Heart left ventricle (tissue), 16 donors: ENCODE measurements at regions of chr3 and their contacts with region 1.

Region 1: GRCh38 chr3:140093742-140094141 is 158.8 kb downstream of the CLSTN2 start:
- DNase-seq: peak in 4 of 5 donors; percentile 68 to 77 (median 71)
- ATAC-seq: peak in 3 of 4 donors; percentile 83 to 95 (median 90)
- H3K4me3 ChIP-seq: no peak overlapping the region
- H3K27ac ChIP-seq: no peak overlapping the region
- H3K4me1 ChIP-seq: peaks cover 0 to 23% (median 8%) of the 10 kb centered on the region in 12 donors
- H3K27me3 ChIP-seq: no peaks in the 10 kb centered on the region
- CTCF ChIP-seq: no peak
- POLR2A ChIP-seq: no peak

Region 2: DNA sequence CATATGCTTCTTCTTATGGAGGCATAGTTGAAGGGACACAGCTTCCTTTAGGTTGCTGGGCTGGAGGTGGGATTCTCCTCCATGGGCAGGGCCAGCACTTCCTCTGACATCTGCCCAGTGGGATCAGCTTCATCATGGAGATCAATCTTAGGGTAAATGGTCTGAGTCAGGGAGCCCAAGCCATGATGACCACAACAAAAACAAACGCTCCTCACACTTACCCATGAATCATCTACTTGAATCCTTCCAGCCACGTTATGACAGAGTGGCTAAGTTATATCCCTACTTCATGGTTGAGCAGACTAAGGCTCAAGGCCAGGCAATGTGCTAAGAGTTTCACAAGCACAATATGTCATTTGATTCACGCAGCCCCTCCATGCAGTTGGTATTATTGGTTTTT is 328.8 kb before region 1 on chr3:
- intact Hi-C with region 1: loop called in 1 of 10 experiments (anchors 5 kb)
- DNase-seq: no peak
- ATAC-seq: no peak
- H3K4me3 ChIP-seq: no peak overlapping the region
- H3K27ac ChIP-seq: no peak overlapping the region
- H3K4me1 ChIP-seq: peaks cover 0 to 11% (median 0%) of the 10 kb centered on the region in 12 donors
- H3K27me3 ChIP-seq: no peaks in the 10 kb centered on the region
- CTCF ChIP-seq: no peak
- POLR2A ChIP-seq: no peak

Region 3: DNA sequence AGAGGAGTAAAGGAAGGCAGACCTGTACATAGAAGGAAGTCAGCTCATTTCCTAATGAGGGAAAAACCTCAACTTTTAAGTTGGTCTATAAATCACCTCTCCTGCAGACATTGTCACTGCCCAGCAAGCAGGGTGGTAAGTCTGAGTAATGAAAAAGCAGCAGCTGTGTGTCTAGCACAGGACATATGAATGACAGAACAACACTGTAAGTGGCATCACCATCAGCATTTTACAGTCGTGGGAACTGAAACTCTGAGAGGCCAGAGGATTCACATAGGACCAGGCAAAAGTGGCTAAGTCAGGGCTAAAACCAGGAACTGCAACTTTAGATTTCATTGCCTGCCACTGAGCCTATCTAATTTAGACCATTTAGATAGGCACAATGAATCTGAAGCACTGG is 76.9 kb after region 1 on chr3:
- intact Hi-C with region 1: no loop called
- DNase-seq: no peak
- ATAC-seq: no peak
- H3K4me3 ChIP-seq: no peak overlapping the region
- H3K27ac ChIP-seq: no peak overlapping the region
- H3K4me1 ChIP-seq: peaks cover 0 to 4% (median 0%) of the 10 kb centered on the region in 12 donors
- H3K27me3 ChIP-seq: no peaks in the 10 kb centered on the region
- CTCF ChIP-seq: no peak
- POLR2A ChIP-seq: no peak